ENCODE measurements at regions of chr1 and their contacts with region 1.

Region 1: DNA sequence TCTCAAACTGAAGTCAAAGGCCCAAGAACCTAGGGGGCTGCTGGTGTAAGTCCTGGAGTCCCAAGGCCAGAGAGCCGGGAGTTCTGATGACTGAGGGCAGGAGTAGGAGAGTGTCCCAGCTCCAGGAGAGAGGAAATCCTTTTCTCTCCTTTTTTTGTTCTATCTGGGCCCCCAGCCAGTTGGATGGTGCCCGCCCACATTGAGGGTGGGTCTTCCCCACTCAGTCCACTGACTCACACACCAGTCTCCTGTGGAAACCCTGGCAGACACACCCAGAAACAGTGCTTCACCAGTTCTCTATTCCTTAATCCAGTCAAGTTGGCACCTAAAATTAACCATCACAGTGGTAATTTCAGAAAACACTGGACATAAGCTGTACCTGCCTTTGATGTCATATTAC is 12.7 kb upstream of the WDR26 start:
- DNase-seq: no peak
- H3K4me3 Mint-ChIP-seq: no peak overlapping the region
- H3K27ac Mint-ChIP-seq: no peak overlapping the region
- H3K4me1 Mint-ChIP-seq: peaks cover 14% of the 10 kb centered on the region
- H3K27me3 Mint-ChIP-seq: no peaks in the 10 kb centered on the region

Region 2: DNA sequence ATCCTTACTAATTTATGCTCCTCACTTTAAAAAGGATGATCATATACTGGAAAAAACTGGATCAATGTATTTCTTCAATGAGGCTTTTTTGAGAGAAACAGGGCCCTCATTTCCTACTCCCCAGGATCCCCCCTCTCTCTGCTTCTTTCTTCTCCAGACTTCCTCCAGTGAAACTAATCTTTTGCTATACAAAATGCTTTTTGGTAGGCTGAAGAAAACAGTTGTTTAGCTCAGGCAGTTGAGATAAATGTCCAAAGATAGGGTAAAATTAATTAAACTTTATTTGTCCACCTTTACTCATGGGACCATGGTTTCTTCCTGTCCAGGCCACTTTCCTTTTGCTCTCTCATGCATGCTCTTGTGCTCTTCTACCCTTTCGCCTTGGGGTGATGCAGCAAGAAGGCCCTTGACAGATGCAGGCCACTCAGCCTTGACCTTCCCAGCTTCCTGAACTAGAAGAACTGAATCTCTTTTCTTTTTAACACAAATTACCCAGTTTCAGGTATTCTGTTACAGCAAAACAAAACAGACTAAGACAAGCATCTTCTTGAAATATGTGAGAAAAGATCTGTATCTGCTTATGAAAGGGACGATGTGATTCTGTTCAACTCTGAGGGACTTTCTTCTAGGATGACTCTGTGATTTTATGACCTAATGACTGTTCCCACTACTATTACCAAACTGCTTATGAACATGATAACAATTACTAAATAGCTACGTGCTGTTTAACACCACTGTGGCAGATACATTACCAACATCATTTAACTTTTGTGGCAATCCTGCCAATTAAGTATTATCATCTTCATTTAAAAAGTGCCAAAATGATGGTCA is 180.9 kb before region 1 on chr1:
- CTCF ChIA-PET with region 1: no interaction called
- POLR2A ChIA-PET with region 1: no interaction called
- DNase-seq: no peak
- H3K4me3 Mint-ChIP-seq: no peak overlapping the region
- H3K27ac Mint-ChIP-seq: peak overlapping the region; percentile 75
- H3K4me1 Mint-ChIP-seq: peaks cover 51% of the 10 kb centered on the region
- H3K27me3 Mint-ChIP-seq: no peaks in the 10 kb centered on the region

Region 3: GRCh38 chr1:224457782-224458144 is 10.5 kb after region 1 on chr1:
- CTCF ChIA-PET with region 1: interaction called, 20 read pairs
- POLR2A ChIA-PET with region 1: no interaction called
- DNase-seq: no peak
- H3K4me3 Mint-ChIP-seq: no peak overlapping the region
- H3K27ac Mint-ChIP-seq: no peak overlapping the region
- H3K4me1 Mint-ChIP-seq: peaks cover 29% of the 10 kb centered on the region
- H3K27me3 Mint-ChIP-seq: no peaks in the 10 kb centered on the region

Measured in activated CD4-positive, alpha-beta T cell treated with anti-CD3 and anti-CD28 coated beads, Interleukin-2, amount 10 ng/mL, durations not matched to agents 7 days and 5 days (primary cell).